Testis (tissue), 5 donors: ENCODE measurements at regions of chr1 and their contacts with region 1.

Region 1: GRCh38 chr1:206106328-206107167 is 10.6 kb downstream of the AVPR1B start:
- DNase-seq: peak; percentile 88
- H3K4me3 ChIP-seq: no peak overlapping the region
- H3K27ac ChIP-seq: no peak overlapping the region
- H3K4me1 ChIP-seq: no peaks in the 10 kb centered on the region
- H3K27me3 ChIP-seq: no peaks in the 10 kb centered on the region
- CTCF ChIP-seq: peak; percentile 86 to 87 (median 87)
- POLR2A ChIP-seq: no peak

Region 2: DNA sequence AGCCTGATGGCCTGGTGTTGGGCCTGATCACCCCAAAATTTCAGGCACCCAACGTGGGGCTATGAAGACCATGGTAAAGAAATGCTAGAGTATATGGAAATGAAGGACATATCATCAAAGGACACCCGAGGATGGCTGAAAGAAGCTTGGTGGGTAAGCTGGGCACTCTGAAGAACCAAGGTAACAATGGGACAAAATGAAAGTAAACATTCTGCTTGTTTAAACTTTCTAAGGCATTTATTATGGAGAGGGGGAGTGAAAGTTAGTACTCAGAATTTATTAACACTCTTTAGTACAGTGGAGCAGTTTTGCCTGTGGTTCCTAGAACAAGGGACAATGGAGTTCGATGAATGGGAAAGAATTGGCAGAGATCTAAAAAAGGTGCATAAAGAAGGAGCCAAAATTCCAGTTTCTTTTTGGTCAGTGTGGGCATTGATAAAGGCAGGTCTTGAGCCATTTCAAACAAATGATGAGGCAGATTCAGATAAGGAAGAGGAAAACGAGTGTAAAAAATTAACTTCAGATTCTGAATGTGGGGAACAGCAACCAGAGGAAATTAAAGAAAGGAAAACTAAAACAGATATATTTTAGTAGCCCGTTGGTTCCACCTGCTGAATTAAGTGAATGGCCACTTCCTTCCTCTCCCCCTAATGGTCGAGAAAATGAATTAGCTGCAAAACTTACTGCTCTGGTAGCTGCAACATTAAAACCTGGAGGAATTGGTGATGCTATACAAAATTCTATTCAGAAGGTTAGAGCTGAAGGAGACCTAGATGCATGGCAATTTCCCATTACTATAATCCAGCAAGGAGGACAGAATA is 248.2 kb before region 1 on chr1:
- intact Hi-C with region 1: no loop called
- DNase-seq: no peak
- H3K4me3 ChIP-seq: no peak overlapping the region
- H3K27ac ChIP-seq: no peak overlapping the region
- H3K4me1 ChIP-seq: no peaks in the 10 kb centered on the region
- H3K27me3 ChIP-seq: no peaks in the 10 kb centered on the region
- CTCF ChIP-seq: no peak
- POLR2A ChIP-seq: no peak

Region 3: DNA sequence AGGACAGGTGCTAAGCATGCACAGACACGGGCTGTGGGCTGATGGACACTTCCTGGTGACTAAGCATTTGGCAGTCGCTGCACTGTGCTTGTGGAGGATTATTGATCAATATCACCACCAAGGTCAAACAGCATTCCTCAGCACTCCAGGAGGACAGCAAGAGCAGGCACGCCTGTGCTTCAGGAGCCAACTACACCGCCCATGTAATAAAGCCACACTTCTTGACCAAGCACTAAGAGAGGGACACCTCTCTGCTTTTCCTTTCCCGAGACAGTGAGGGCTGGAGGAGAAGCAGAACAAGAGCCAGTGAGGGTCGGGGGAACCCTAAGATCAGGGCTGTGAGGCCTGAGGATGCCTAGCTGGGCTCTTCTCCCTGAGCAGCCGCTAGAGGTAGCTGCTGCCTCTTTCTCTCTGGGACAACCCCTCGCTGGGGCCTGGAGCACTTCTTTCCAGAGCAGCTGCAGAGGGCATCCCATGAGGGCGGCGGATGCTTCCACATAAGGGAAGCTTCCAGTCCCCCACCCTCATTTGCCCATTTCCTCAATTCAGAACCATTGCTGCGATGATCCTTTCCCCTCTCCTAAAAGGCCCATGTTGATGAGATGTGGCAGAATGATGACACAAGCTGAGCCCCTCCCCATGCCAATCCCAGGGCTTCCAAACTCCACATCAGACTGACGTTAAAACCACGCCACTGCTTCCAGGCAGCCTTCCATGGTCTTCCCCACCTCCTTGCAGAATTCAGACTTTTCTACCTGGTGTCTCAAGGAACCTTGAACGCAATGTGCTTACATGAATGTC is 122.4 kb before region 1 on chr1:
- intact Hi-C with region 1: loop called (anchors 10 kb)
- DNase-seq: peak; percentile 80
- H3K4me3 ChIP-seq: no peak overlapping the region
- H3K27ac ChIP-seq: no peak overlapping the region
- H3K4me1 ChIP-seq: peaks cover 11% of the 10 kb centered on the region
- H3K27me3 ChIP-seq: no peaks in the 10 kb centered on the region
- CTCF ChIP-seq: peak; percentile 45 to 53 (median 50)
- POLR2A ChIP-seq: no peak

Region 4: GRCh38 chr1:206041640-206042039 is 64.9 kb before region 1 on chr1:
- intact Hi-C with region 1: no loop called
- DNase-seq: peak; percentile 13
- H3K4me3 ChIP-seq: no peak overlapping the region
- H3K27ac ChIP-seq: no peak overlapping the region
- H3K4me1 ChIP-seq: no peaks in the 10 kb centered on the region
- H3K27me3 ChIP-seq: no peaks in the 10 kb centered on the region
- CTCF ChIP-seq: no peak
- POLR2A ChIP-seq: no peak